ENCODE measurements at regions of chr2 and their contacts with region 1.

Region 1: DNA sequence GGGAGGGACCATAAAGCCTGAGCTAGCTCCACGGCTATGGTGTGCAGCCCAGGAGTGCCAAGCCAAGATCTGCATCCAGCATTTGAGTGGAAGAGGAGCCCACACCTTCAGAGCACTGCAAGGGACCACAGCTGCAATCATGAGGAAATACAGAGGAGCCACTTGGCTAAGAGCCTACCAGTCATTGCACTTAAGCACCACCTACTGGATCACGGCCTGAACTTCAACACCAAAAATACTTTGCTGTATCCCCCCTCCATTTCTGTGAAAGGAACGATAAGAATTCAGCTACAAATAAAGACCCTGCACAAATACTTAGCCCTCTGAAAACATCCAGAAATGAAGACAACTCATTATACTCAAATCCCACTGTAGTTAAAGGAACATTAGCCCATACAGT is 545.3 kb downstream of the TSN start:
- DNase-seq: peak; percentile 69 to 70
- H3K4me3 ChIP-seq: no peak overlapping the region
- H3K4me1 ChIP-seq: peaks cover 3% of the 10 kb centered on the region
- H3K27me3 ChIP-seq: no peaks in the 10 kb centered on the region

Region 2: GRCh38 chr2:121400201-121400600 is 900.6 kb before region 1 on chr2:
- in situ Hi-C with region 1: no loop called
- DNase-seq: no peak
- H3K4me3 ChIP-seq: no peak overlapping the region
- H3K4me1 ChIP-seq: no peaks in the 10 kb centered on the region
- H3K27me3 ChIP-seq: no peaks in the 10 kb centered on the region

Region 3: DNA sequence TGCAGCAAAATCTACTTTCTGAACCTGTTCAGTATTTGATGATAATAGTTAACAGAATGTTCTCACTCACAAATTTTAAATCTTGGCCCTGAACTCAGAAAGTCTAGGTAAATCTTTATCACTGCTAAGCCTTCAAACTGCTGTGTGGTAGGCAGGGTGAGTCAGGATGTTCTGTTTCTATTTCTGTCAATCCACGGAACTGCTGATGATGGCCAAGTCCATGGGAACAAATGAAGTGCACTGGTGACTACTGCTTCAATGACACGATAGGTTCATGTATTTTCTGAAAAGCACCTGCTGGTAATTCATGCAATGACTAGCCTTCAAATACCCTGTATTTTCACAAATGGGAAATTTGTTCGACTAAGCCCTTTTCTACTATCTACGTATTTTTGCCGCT is 578.3 kb before region 1 on chr2:
- in situ Hi-C with region 1: no loop called
- DNase-seq: no peak
- H3K4me3 ChIP-seq: no peak overlapping the region
- H3K4me1 ChIP-seq: no peaks in the 10 kb centered on the region
- H3K27me3 ChIP-seq: no peaks in the 10 kb centered on the region

Region 4: DNA sequence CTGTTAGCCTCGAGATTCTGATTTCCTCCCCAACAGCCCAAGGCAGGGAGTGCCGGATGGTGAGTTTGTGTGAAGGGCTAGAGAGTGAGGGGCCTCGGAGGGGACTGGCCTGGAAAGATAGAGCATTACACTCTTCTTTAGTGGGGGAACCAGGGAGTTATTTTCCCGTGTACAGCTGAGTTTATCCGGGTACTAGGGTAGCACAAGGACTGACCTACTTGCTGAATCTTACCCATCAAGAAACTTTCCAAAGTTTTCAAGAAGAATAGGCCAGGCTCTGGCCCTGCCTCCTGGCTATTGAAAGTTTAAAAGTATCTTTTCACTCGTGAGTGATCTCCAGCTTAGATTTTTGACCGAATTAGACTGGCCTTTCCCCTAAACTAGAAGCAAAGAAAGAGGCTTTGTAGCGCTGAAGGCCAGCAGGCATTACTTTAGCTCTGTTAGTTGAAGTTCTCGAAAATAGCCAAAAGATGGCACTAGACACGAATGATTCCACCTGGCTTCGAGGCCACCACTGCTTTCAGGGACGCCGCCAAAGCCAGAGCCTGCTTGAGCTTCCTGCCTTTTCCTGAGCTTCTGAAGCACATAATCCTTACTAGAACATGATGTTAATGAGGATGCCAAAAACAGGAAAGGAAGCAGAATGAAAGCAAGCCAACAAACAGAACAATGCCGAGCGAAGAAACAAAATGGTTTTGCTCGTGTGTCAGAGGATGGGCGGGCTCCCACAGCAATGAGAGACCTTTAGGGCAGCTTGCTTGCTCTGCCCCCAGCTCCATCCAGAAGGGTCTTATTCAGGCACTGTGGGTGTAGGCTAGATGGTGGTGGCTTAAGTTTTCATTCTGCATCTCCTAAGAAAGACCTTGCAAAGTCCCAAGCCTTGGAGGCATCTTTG is 489.6 kb before region 1 on chr2:
- in situ Hi-C with region 1: loop called (anchors 25 kb)
- DNase-seq: peak; percentile 61 to 72
- H3K4me3 ChIP-seq: no peak overlapping the region
- H3K4me1 ChIP-seq: peaks cover 7% of the 10 kb centered on the region
- H3K27me3 ChIP-seq: no peaks in the 10 kb centered on the region

Region 5: DNA sequence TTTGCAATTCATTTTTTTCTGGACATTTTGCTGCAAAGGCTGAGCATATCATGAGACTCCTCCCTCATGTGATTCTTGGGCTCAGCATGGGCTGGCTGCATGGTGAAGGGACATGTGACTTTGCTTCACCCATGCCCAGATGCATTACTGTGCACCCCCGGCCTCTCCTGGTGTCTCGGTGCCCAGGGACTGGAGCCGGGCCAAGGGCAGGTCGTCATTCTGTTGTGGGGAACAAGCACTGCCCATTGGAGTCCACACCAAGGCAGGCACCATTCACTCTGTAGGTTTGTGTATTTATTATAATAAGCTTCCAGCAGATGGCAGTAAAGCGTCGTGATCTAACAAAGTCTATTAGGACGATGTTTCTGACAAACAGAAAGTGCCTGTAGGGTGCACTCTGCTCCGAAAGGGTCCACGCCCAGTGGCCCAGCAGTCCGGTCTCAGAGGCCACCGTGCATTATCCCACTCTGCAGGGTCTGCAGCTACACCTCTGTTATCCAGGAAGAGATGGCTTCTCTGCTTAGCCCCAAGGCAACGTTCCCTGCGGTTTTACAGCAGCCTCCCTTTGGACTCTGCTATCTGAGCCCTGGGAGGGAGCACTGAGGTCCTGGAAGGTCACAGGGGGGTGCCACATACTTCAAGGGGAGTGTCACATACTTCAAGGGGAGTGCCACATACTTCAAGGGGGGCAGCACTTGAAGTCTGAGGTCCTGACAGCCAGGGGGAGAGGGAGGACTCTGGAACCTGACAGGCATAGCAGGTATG is 325.7 kb before region 1 on chr2:
- in situ Hi-C with region 1: loop called (anchors 25 kb)
- DNase-seq: peak; percentile 76 to 84
- H3K4me3 ChIP-seq: no peak overlapping the region
- H3K4me1 ChIP-seq: no peaks in the 10 kb centered on the region
- H3K27me3 ChIP-seq: peaks cover under 1% of the 10 kb centered on the region; the same call in 1 of the 2 replicates

Measured in HAP-1 (cell line).